Activated T-helper 1 cell treated with anti-CD3 and anti-CD28 coated beads, Interleukin-12 subunit alpha, Interleukin-12 subunit beta, Interleukin-2, Interleukin-4 antibody, amounts not matched to agents 30 ng/mL and 10 ng/mL and 1 ng/mL, durations not matched to agents 14 hours and 24 hours and 36 hours (primary cell): ENCODE measurements at regions of chr2 and their contacts with region 1.

Region 1: GRCh38 chr2:30298302-30298701 is 67.0 kb downstream of the LBH start:
- DNase-seq: no peak
- H3K4me3 Mint-ChIP-seq: no peak overlapping the region
- H3K27ac Mint-ChIP-seq: peak overlapping the region; percentile 80
- H3K4me1 Mint-ChIP-seq: peaks cover 26% of the 10 kb centered on the region
- H3K27me3 Mint-ChIP-seq: peaks cover 3% of the 10 kb centered on the region

Region 2: DNA sequence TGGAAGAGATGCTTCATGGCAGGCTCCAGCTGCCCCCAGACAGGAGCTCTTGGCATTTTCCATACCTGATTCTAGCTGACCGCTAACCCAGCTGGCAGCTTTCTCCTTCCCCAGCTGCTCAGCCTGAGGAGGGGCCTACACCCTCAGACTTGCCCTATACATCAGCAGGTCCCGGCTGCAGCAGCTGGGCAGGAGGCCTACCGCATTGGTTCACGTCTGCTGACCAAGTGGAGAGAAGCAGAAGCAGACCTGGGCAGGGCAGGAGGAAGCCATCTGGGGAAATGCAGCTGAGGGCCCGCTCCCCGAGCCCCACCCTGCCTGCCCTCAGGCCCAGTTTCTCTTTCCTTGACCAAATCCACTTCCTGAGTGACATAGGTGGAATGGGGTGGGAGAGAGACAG is 16.2 kb before region 1 on chr2:
- intact Hi-C with region 1: loop called (anchors 2 kb)
- DNase-seq: no peak
- H3K4me3 Mint-ChIP-seq: no peak overlapping the region
- H3K27ac Mint-ChIP-seq: no peak overlapping the region
- H3K4me1 Mint-ChIP-seq: peaks cover 28% of the 10 kb centered on the region
- H3K27me3 Mint-ChIP-seq: peaks cover 3% of the 10 kb centered on the region

Region 3: DNA sequence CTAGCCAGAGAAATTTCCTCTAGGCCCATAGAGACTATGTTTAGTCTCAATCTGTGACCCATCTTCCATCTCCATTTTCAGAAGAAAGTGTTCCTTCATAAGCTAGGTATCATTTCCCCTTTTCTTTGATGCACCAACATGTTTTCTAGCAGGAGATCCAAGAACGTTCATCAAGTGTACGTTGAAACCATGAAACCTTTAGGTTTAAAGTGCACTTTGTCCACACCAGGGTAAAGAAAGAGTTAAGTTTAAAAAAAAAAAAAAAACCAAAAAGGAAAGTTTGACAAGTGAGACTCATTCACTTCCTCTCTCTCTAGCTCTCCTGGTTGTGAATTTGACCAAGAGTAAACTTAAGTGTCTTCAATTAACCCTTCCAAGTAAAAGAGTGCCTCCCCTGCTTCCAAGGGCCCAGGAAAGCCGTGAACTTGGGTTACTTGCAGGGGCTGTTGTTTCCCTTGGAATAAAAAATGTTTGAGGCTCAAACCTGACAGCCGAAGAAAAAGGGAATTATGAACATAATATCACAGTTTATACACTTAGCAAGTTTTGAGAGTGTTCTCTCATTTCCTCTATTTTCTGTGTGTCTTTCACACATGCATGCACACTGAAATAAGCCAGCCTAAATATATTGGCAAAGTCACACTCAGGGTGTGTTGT is 10.3 kb before region 1 on chr2:
- intact Hi-C with region 1: loop called (anchors 1 kb)
- DNase-seq: no peak
- H3K4me3 Mint-ChIP-seq: peak overlapping the region; percentile 57
- H3K27ac Mint-ChIP-seq: peak overlapping the region; percentile 83
- H3K4me1 Mint-ChIP-seq: peaks cover 31% of the 10 kb centered on the region
- H3K27me3 Mint-ChIP-seq: peaks cover 2% of the 10 kb centered on the region